AG04450 (cell line): ENCODE measurements at regions of chr5 and their contacts with region 1.

Region 1: GRCh38 chr5:36079200-36079761 is 12.6 kb upstream of the UGT3A2 start:
- DNase-seq: peak; percentile 10
- H3K4me3 ChIP-seq: no peak overlapping the region
- H3K27ac ChIP-seq: no peak overlapping the region
- H3K27me3 ChIP-seq: peaks cover 9% of the 10 kb centered on the region
- CTCF ChIP-seq: peak; percentile 77

Region 2: GRCh38 chr5:36089989-36090564 is 10.8 kb after region 1 on chr5:
- CTCF ChIA-PET with region 1: interaction called, 77 read pairs
- POLR2A ChIA-PET with region 1: no interaction called
- DNase-seq: no peak
- H3K4me3 ChIP-seq: no peak overlapping the region
- H3K27ac ChIP-seq: no peak overlapping the region
- H3K27me3 ChIP-seq: no peaks in the 10 kb centered on the region
- CTCF ChIP-seq: peak; percentile 47; the same call in 1 of the 2 replicates

Region 3: GRCh38 chr5:36108758-36109460 is 29.6 kb after region 1 on chr5:
- CTCF ChIA-PET with region 1: interaction called, 12 read pairs
- POLR2A ChIA-PET with region 1: no interaction called
- DNase-seq: no peak
- H3K4me3 ChIP-seq: no peak overlapping the region
- H3K27ac ChIP-seq: no peak overlapping the region
- H3K27me3 ChIP-seq: no peaks in the 10 kb centered on the region
- CTCF ChIP-seq: no peak

Region 4: GRCh38 chr5:36151434-36152323 is 72.4 kb after region 1 on chr5 and contains the starts of genes LMBRD2 and SKP2:
- CTCF ChIA-PET with region 1: interaction called, 31 read pairs
- POLR2A ChIA-PET with region 1: no interaction called
- DNase-seq: peak; percentile 94
- H3K4me3 ChIP-seq: peak within 1 kb of the TSS; percentile 84
- H3K27ac ChIP-seq: no peak within 1 kb of the TSS
- H3K27me3 ChIP-seq: no peaks in the 10 kb centered on the region
- CTCF ChIP-seq: no peak
- polyA plus RNA-seq, gene LMBRD2: 4.1 and 5.3 TPM in 2 replicates
- polyA plus RNA-seq, gene SKP2: 21.6 and 24.6 TPM in 2 replicates

Region 5: GRCh38 chr5:36305571-36306326 is 226.5 kb after region 1 on chr5:
- CTCF ChIA-PET with region 1: interaction called, 41 read pairs
- POLR2A ChIA-PET with region 1: no interaction called
- DNase-seq: no peak
- H3K4me3 ChIP-seq: no peak overlapping the region
- H3K27ac ChIP-seq: no peak overlapping the region
- H3K27me3 ChIP-seq: no peaks in the 10 kb centered on the region
- CTCF ChIP-seq: peak; percentile 85

Region 6: GRCh38 chr5:36695677-36696673 is 616.7 kb after region 1 on chr5:
- CTCF ChIA-PET with region 1: interaction called, 16 read pairs
- POLR2A ChIA-PET with region 1: no interaction called
- DNase-seq: peak; percentile 21
- H3K4me3 ChIP-seq: no peak overlapping the region
- H3K27ac ChIP-seq: no peak overlapping the region
- H3K27me3 ChIP-seq: peaks cover 7% of the 10 kb centered on the region
- CTCF ChIP-seq: peak; percentile 85